ENCODE measurements at regions of chr14 and their contacts with region 1.

Region 1: GRCh38 chr14:60561845-60562746 is 53.1 kb downstream of the SIX6 start:
- DNase-seq: no peak
- H3K4me3 ChIP-seq: no peak overlapping the region
- H3K27ac ChIP-seq: no peak overlapping the region
- H3K4me1 ChIP-seq: peaks cover 0 to 6% (median 2%) of the 10 kb centered on the region in 4 donors
- H3K27me3 ChIP-seq: no peaks in the 10 kb centered on the region
- CTCF ChIP-seq: peak; percentile 35 to 49 (median 38)
- EP300 ChIP-seq: no peak
- POLR2A ChIP-seq: no peak

Region 2: DNA sequence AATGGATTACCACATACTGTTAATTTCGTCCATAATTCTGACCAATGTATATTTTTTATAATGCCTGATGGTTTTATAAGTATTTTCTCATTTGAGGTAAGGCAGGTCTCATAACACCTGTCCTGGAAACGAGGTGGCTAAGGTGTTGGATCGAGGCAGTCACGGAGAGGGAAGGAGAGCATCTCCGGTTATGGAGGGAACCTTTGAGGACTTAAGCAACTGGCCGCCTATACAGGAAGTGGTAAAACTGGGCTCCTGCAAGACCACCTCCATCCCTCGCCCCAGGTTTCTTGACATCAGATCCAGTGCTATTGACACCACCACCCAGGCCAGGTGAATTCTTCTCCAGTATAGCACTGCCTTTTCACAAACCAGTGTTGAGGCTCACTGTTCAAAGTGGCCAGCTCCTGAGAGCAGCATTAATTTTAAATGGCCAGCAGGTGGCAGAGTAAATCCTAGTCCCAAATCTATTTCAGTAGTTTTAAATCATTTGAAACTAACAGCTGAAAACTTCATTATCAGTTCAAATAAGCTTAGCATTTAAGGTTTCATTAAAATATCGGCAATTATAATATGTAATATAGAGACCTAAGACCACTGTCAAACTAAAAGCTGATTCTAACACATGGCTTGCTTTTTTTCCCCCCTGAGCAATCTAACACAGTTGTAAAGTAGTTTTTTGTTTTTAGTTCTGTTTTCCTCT is 212.3 kb before region 1 on chr14:
- intact Hi-C with region 1: loop called (anchors 5 kb)
- DNase-seq: no peak
- H3K4me3 ChIP-seq: peak overlapping the region in 2 of 4 donors; percentile 5 to 8
- H3K27ac ChIP-seq: no peak overlapping the region
- H3K4me1 ChIP-seq: peaks cover 3 to 9% (median 5%) of the 10 kb centered on the region in 4 donors
- H3K27me3 ChIP-seq: no peaks in the 10 kb centered on the region
- CTCF ChIP-seq: peak; percentile 51 to 76 (median 62)
- EP300 ChIP-seq: no peak
- POLR2A ChIP-seq: no peak

Measured in esophagus muscularis mucosa (tissue), 4 donors.